ENCODE measurements at regions of chr5 and their contacts with region 1.

Region 1: GRCh38 chr5:36728697-36729543 is 122.5 kb downstream of the SLC1A3 start:
- DNase-seq: peak; percentile 16
- ATAC-seq: peak; percentile 48
- H3K4me3 Mint-ChIP-seq: no peak overlapping the region
- H3K27ac Mint-ChIP-seq: no peak overlapping the region
- H3K4me1 Mint-ChIP-seq: peaks cover 5% of the 10 kb centered on the region
- H3K27me3 Mint-ChIP-seq: no peaks in the 10 kb centered on the region

Region 2: GRCh38 chr5:36708996-36709395 is 19.9 kb before region 1 on chr5:
- CTCF ChIA-PET with region 1: interaction called, 10 read pairs
- POLR2A ChIA-PET with region 1: no interaction called
- intact Hi-C with region 1: no loop called
- DNase-seq: no peak
- ATAC-seq: no peak
- H3K4me3 Mint-ChIP-seq: no peak overlapping the region
- H3K27ac Mint-ChIP-seq: no peak overlapping the region
- H3K4me1 Mint-ChIP-seq: no peaks in the 10 kb centered on the region
- H3K27me3 Mint-ChIP-seq: no peaks in the 10 kb centered on the region

Region 3: GRCh38 chr5:36739751-36740221 is 10.9 kb after region 1 on chr5:
- CTCF ChIA-PET with region 1: interaction called, 22 read pairs
- POLR2A ChIA-PET with region 1: interaction called, 3 read pairs
- intact Hi-C with region 1: no loop called
- DNase-seq: peak; percentile 86
- ATAC-seq: peak; percentile 85
- H3K4me3 Mint-ChIP-seq: no peak overlapping the region
- H3K27ac Mint-ChIP-seq: no peak overlapping the region
- H3K4me1 Mint-ChIP-seq: peaks cover 8% of the 10 kb centered on the region
- H3K27me3 Mint-ChIP-seq: peaks cover 31% of the 10 kb centered on the region

Region 4: GRCh38 chr5:36744773-36745589 is 16.1 kb after region 1 on chr5:
- CTCF ChIA-PET with region 1: interaction called, 22 read pairs
- POLR2A ChIA-PET with region 1: interaction called, 3 read pairs
- intact Hi-C with region 1: no loop called
- DNase-seq: peak; percentile 57
- ATAC-seq: peak; percentile 63
- H3K4me3 Mint-ChIP-seq: peak overlapping the region; percentile 72
- H3K27ac Mint-ChIP-seq: peak overlapping the region; percentile 4
- H3K4me1 Mint-ChIP-seq: peaks cover 10% of the 10 kb centered on the region
- H3K27me3 Mint-ChIP-seq: peaks cover 48% of the 10 kb centered on the region

Region 5: DNA sequence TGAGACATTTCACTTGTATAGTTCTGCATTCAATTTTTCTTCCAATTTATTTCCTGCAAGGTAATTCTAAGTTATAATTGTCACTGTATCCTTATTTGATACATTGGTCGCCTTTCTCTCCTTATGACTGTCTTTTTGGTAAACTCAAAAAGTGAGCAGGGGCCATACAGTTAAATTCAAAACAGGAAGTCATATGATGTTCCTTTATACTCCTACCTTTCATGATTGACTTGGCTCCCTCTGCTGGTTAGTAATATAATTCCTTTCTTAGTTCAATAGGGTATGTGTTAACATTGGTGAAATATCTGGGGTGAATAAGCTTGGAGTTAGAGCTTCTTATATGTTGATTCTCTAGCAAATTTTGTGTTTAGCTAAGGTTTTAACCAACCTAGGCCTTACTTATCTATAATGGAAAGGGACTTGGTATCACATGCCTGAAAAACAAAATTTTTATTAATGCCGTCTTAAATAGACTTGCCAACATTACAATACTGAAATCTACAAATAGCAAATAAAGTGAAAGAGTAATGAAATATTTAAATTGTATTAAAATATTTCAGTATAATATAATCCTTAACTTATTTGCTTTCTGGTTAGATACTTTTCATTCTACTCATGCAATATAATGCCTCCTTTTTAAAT is 141.6 kb after region 1 on chr5:
- CTCF ChIA-PET with region 1: interaction called, 10 read pairs
- POLR2A ChIA-PET with region 1: no interaction called
- intact Hi-C with region 1: loop called in 1 of 2 experiments (anchors 2 kb)
- DNase-seq: no peak
- ATAC-seq: peak; percentile 82
- H3K4me3 Mint-ChIP-seq: no peak overlapping the region
- H3K27ac Mint-ChIP-seq: peak overlapping the region; percentile 28
- H3K4me1 Mint-ChIP-seq: peaks cover 27% of the 10 kb centered on the region
- H3K27me3 Mint-ChIP-seq: no peaks in the 10 kb centered on the region

Region 6: DNA sequence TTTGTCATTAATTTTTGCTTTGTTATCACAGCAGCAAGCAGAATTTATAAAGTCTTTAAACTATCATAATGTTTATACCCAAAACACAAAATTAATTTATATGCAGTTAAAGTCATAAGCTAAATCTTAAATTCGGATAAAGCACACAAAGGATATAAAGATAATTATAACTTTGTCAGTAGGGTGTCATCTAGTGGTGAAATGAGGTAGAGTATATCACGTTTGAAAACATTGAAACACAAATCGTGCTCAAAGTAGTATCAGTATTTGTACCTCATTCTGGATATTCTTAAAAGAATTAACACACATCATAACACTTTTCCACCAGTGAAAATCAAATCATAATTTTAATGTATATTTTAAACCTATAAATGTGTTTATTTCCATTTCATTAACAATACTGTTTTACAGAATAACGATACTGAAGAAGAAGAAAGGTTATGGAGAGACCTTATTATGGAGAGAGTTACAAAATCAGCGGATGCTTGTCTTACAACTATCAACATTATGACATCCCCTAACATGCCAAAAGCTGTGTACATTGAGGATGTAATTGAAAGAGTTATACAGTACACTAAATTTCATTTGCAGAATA is 277.1 kb after region 1 on chr5:
- CTCF ChIA-PET with region 1: interaction called, 22 read pairs
- POLR2A ChIA-PET with region 1: no interaction called
- intact Hi-C with region 1: loop called (anchors 1 to 2 kb)
- DNase-seq: no peak
- ATAC-seq: no peak
- H3K4me3 Mint-ChIP-seq: no peak overlapping the region
- H3K27ac Mint-ChIP-seq: no peak overlapping the region
- H3K4me1 Mint-ChIP-seq: no peaks in the 10 kb centered on the region
- H3K27me3 Mint-ChIP-seq: no peaks in the 10 kb centered on the region